Gastrocnemius medialis (tissue), 4 donors: ENCODE measurements at regions of chr2 and their contacts with region 1.

Region 1: GRCh38 chr2:55014962-55015939 is 35.0 kb downstream of the RTN4 start:
- DNase-seq: peak; percentile 41
- ATAC-seq: peak; percentile 52 to 53
- H3K4me3 ChIP-seq: peak overlapping the region in 1 of 4 donors; percentile 10
- H3K27ac ChIP-seq: peak overlapping the region; percentile 53 to 93 (median 89)
- H3K4me1 ChIP-seq: peaks cover 46 to 48% of the 10 kb centered on the region in 2 donors
- H3K27me3 ChIP-seq: no peaks in the 10 kb centered on the region
- CTCF ChIP-seq: peak; percentile 60 to 75 (median 68)
- POLR2A ChIP-seq: no peak

Region 2: DNA sequence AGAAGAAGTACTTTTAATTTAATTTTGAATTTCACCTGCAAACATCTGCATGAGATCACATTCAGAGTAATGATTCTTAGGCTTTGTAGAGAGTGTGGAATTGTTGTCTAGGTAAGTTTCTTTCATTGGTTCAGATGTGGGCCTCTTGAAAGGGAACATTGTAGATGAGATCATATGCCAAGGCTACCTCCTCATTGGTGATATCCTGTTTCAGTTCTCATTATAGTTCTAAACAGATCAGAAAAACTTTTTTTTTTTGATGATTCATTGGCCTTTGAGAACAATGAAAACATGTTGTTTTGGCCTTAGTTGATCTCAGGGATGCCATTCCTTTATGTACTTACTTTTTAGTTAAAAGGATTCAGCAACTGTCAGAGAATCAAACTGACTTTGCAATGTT is 247.3 kb before region 1 on chr2:
- in situ Hi-C with region 1: no loop called
- intact Hi-C with region 1: no loop called
- DNase-seq: no peak
- ATAC-seq: no peak
- H3K4me3 ChIP-seq: no peak overlapping the region
- H3K27ac ChIP-seq: no peak overlapping the region
- H3K4me1 ChIP-seq: peaks cover 0 to 4% of the 10 kb centered on the region in 2 donors
- H3K27me3 ChIP-seq: no peaks in the 10 kb centered on the region
- CTCF ChIP-seq: no peak
- POLR2A ChIP-seq: no peak

Region 3: DNA sequence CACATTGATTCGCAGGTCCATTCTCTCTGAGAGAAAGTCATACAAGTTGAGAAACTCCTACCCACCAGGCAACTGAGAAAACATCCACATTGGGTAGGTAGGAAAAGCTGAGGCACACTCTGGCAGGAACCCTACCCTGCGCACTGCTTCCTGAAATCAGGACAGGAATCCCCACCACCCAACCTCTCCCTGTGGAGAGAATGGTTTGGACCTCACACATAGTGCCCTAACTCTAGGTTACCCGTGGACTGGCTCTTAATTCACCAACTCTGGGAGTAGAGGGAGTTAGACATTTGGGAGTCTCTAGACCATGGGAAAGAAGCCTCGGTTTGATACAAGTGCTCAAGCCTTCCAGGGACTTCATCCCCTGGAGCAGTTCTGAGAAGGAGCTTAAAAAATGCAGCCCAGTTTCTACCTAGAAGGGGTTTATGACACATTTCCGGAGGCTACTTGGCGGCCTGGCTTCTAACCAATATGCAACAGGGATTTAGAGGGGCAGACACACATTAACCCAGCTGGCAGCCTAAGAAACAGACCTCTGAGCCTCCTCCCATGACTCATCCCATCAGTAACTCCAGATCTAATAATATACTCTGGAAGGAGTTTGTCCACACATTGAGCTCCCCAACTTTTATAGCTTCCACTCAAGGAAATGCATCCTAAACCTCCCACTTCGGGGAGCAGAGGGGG is 155.1 kb before region 1 on chr2:
- in situ Hi-C with region 1: no loop called
- intact Hi-C with region 1: loop called (anchors 1 kb)
- DNase-seq: no peak
- ATAC-seq: peak; percentile 53 to 58
- H3K4me3 ChIP-seq: no peak overlapping the region
- H3K27ac ChIP-seq: no peak overlapping the region
- H3K4me1 ChIP-seq: no peaks in the 10 kb centered on the region
- H3K27me3 ChIP-seq: no peaks in the 10 kb centered on the region
- CTCF ChIP-seq: no peak
- POLR2A ChIP-seq: no peak

Region 4: GRCh38 chr2:54894467-54894866 is 120.8 kb before region 1 on chr2:
- in situ Hi-C with region 1: loop called in 1 of 4 experiments (anchors 5 kb)
- intact Hi-C with region 1: no loop called
- DNase-seq: no peak
- ATAC-seq: no peak
- H3K4me3 ChIP-seq: no peak overlapping the region
- H3K27ac ChIP-seq: no peak overlapping the region
- H3K4me1 ChIP-seq: no peaks in the 10 kb centered on the region
- H3K27me3 ChIP-seq: no peaks in the 10 kb centered on the region
- CTCF ChIP-seq: no peak
- POLR2A ChIP-seq: no peak

Region 5: DNA sequence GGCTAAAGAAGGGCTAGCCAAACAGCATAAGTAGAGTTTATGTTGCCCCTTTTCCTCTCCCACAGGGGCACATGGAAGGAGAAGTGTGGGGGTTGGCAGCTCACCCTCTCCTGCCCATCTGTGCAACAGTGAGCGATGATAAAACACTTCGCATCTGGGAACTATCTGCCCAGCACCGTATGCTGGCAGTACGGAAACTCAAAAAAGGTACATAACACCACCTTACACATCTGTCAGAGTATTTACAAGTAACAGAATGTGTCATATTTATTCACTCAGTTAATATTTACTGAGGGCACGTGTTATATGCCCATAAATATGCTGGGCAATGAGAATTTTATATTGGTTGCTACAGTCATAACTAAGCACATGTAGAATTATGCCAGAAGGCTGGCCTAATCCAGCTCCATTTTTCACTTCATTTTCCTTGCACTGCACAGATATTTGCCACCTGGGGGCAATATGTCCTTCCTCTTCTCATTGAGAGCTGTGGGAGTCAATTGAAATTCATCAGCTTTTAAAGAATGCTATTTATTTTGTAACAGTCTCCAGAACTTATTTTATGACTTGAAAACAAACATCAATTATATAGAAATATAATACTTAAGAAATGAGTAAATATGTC is 115.6 kb before region 1 on chr2:
- in situ Hi-C with region 1: loop called in 2 of 4 experiments (anchors 5 to 10 kb)
- intact Hi-C with region 1: loop called (anchors 1 kb)
- DNase-seq: no peak
- ATAC-seq: peak; percentile 51 to 64
- H3K4me3 ChIP-seq: no peak overlapping the region
- H3K27ac ChIP-seq: peak overlapping the region in 3 of 4 donors; percentile 22 to 72 (median 69)
- H3K4me1 ChIP-seq: peaks cover 16 to 22% of the 10 kb centered on the region in 2 donors
- H3K27me3 ChIP-seq: no peaks in the 10 kb centered on the region
- CTCF ChIP-seq: peak; percentile 21 to 66 (median 44)
- POLR2A ChIP-seq: no peak

Region 6: GRCh38 chr2:54945391-54946219 is 69.6 kb before region 1 on chr2:
- in situ Hi-C with region 1: no loop called
- intact Hi-C with region 1: loop called (anchors 2 kb)
- DNase-seq: peak; percentile 91 to 97
- ATAC-seq: peak; percentile 91 to 96
- H3K4me3 ChIP-seq: peak overlapping the region in 3 of 4 donors; percentile 21 to 47 (median 27)
- H3K27ac ChIP-seq: peak overlapping the region; percentile 91 to 95 (median 94)
- H3K4me1 ChIP-seq: peaks cover 22 to 27% of the 10 kb centered on the region in 2 donors
- H3K27me3 ChIP-seq: no peaks in the 10 kb centered on the region
- CTCF ChIP-seq: no peak
- POLR2A ChIP-seq: peak; percentile 50 to 57

Region 7: GRCh38 chr2:55168221-55169154 is 153.2 kb after region 1 on chr2:
- in situ Hi-C with region 1: loop called in 3 of 4 experiments (anchors 5 kb)
- intact Hi-C with region 1: loop called (anchors 2 kb)
- DNase-seq: peak in 1 of 2 donors; percentile 41
- ATAC-seq: peak; percentile 75 to 79
- H3K4me3 ChIP-seq: no peak overlapping the region
- H3K27ac ChIP-seq: peak overlapping the region in 1 of 4 donors; percentile 1
- H3K4me1 ChIP-seq: peaks cover 0 to 8% of the 10 kb centered on the region in 2 donors
- H3K27me3 ChIP-seq: no peaks in the 10 kb centered on the region
- CTCF ChIP-seq: peak; percentile 26 to 56 (median 52)
- POLR2A ChIP-seq: no peak

Region 8: DNA sequence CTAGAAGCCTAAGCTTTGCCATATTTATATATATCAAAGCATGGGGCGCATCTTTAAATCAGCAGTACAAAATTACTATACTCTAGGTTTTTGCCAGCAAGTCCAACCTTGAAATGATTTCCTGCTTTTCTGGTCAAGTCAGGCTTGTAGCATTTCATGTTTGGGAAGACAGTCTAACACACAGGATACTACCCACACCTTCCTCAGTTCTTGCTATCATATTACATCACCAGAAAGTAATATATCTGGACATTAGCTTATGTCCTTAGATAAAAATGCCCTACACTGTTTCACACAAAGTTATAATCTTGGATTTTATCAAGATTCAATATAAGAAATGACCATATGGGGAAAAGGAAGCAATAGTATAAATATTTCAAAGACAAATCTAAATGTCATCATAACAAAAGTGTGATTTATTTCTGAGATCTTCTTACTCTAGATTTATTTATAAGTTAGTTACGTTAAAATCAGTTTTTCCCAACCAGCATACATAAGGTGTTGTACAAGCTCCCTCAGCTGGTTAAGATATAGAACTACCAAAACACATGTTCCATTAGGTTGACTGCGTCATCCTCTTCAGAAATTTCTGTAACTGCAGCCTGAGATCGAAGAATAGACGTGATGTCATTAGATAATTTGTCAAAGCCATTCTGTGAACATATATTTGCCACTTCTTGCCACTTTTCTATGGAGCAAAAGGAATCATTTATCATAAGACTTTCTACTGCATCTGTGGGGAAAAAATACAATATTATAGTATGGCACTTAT is 160.2 kb after region 1 on chr2:
- in situ Hi-C with region 1: loop called in 1 of 4 experiments (anchors 5 kb)
- intact Hi-C with region 1: loop called (anchors 1 kb)
- DNase-seq: no peak
- ATAC-seq: peak; percentile 89 to 90
- H3K4me3 ChIP-seq: no peak overlapping the region
- H3K27ac ChIP-seq: no peak overlapping the region
- H3K4me1 ChIP-seq: peaks cover 0 to 6% of the 10 kb centered on the region in 2 donors
- H3K27me3 ChIP-seq: no peaks in the 10 kb centered on the region
- CTCF ChIP-seq: peak; percentile 16 to 61 (median 58)
- POLR2A ChIP-seq: no peak